Ovary (tissue), 10 donors: ENCODE measurements at regions of chr18 and their contacts with region 1.

Region 1: DNA sequence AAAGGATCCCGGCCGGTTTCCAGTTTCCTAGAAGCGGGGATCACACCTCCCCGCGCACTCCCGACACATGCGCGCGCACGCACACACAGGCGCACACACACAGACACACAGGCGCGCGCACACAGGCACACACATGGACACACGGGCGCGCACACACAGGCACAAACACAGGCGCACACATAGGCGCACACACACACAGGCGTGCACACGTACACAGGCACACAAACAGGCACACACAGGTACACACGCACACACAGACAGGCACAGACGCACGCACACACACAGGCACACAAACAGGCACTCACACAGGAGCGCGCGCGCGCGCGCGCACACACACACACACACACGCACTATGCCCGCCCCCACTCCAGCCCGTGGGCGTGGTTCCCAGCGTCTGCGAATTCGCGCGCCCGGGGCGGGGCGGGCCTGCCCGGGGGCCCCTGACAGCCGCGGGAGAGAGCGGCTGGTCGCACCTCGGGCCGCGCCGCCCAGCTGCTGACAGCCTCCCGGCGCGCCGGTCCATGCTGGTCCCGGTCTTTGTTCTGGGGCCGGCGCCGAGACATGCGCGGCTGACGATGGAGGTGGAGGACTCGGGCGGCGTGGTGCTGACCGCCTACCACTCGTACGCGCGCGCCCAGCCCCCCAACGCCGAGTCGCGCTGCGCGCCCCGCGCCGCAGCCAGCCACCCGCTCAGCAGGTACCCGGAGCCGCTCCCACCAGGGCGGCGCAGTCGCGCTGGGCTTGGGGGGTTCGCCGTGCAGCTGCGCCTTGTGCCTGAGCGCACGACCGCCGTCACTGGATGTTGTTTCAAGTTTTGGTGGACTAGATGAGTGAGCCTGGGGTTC is at the start of gene ARHGAP28:
- DNase-seq: peak; percentile 89 to 98 (median 93)
- H3K4me3 ChIP-seq: peak within 1 kb of the TSS; percentile 62
- H3K27ac ChIP-seq: peak within 1 kb of the TSS; percentile 89 to 97
- H3K4me1 ChIP-seq: peaks cover 7% of the 10 kb centered on the region
- H3K27me3 ChIP-seq: no peaks in the 10 kb centered on the region
- CTCF ChIP-seq: peak; percentile 42 to 67 (median 59)
- EP300 ChIP-seq: no peak
- POLR2A ChIP-seq: peak; percentile 52
- total RNA-seq, gene ARHGAP28: 15.7 to 28.7 (median 19.2) TPM

Region 2: DNA sequence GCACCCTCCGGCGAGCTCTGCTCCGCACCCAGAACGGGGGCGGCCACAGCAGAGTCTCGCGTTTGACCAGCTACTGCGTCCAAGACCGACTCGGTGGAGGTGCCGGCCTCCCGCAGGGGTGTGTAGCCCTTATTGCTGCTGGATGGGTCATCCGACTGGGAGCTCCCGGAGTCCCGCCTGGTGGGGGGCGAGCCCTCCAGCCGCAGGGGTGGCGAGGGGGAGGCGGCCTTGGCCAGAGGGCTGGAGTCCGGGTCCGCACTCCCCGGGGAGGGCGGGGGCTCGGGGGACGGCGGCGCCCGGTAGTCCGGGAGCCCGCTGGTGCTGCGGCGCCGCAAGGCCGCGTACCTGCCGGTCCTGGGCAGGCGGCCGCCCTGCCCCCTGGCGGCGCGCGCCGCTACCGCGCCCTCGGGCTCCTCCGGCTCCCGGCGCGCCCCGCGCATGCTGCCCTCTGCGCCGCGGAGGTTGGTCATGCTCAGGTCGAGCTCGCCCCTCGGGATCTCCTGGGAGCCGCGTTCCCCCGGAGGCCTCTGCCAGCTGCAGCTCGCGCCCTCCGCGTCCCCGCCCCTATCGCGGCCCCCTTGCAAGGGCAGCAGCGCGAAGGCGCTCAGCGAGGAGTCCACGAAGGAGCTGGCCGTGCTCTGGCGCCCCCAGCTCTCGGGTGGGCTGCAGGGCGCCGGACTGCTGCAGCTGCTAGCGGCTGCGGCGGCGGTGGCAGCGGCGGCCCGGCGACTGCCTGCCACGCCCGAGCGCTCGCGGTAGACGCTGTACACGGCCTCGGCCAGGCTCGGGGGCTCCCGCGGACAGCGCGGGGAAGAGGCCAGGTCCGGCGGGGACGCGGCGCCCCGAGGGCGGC is 838.9 kb before region 1 on chr18:
- intact Hi-C with region 1: loop called in 1 of 4 experiments (anchors 10 kb)
- DNase-seq: peak; percentile 35 to 70 (median 55)
- H3K4me3 ChIP-seq: peak overlapping the region; percentile 17
- H3K27ac ChIP-seq: no peak overlapping the region
- H3K4me1 ChIP-seq: peaks cover 2% of the 10 kb centered on the region
- H3K27me3 ChIP-seq: no peaks in the 10 kb centered on the region
- CTCF ChIP-seq: peak; percentile 10 to 61 (median 52)
- EP300 ChIP-seq: no peak
- POLR2A ChIP-seq: no peak

Region 3: DNA sequence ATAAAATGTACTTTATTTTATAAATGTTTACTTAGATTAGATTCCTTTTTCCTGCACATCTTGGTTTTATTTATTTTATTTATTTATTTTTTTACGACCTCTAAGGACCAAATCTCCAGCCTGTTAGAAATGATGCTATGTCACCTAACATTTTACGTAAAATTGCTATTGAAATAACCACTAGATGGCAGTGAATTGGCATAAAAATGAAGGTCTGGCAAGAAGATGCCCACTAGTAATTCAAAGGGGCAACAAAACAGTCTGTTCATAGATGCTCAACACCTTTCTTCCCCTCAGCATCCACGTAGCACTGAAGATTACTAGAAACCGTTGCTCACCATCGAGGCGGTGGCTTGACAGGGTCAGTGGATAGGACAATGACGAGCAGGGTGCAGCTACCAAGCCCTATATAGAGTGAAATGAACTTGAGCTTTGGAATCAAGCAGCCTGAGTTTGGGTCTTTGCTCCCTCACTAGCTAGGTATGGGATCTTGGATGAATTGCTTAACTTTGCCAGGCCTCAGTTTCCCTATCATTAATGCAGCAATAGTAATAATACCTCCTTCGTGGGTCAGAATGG is 186.1 kb before region 1 on chr18:
- intact Hi-C with region 1: loop called in 1 of 4 experiments (anchors 5 kb)
- DNase-seq: no peak
- H3K4me3 ChIP-seq: no peak overlapping the region
- H3K27ac ChIP-seq: no peak overlapping the region
- H3K4me1 ChIP-seq: peaks cover 5% of the 10 kb centered on the region
- H3K27me3 ChIP-seq: no peaks in the 10 kb centered on the region
- CTCF ChIP-seq: peak; percentile 42 to 63 (median 61)
- EP300 ChIP-seq: no peak
- POLR2A ChIP-seq: no peak

Region 4: GRCh38 chr18:6624271-6624660 is 105.2 kb before region 1 on chr18:
- intact Hi-C with region 1: loop called in 2 of 4 experiments (anchors 10 kb)
- DNase-seq: no peak
- H3K4me3 ChIP-seq: no peak overlapping the region
- H3K27ac ChIP-seq: peak overlapping the region in 1 of 2 donors; percentile 77
- H3K4me1 ChIP-seq: peaks cover 20% of the 10 kb centered on the region
- H3K27me3 ChIP-seq: no peaks in the 10 kb centered on the region
- CTCF ChIP-seq: no peak
- EP300 ChIP-seq: no peak
- POLR2A ChIP-seq: no peak

Region 5: DNA sequence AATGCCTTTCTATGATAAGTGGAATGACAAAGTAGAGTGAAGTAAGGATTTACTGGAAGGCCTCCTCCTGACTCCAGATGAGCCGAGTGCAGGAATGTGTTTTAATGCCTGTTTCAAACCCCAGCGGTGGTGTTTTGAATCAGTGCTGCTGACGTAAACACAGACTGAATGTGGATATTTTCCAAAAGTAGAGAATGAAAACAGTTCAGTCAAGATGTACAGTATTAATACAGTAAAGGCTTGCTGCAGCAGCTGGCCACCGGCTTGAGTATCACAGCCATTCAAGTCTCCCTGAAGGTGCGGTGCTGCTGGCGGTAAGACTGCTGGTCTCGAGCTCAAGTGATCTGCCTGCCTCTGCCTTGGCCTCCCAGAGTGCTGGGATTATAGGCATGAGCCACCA is 46.7 kb after region 1 on chr18:
- intact Hi-C with region 1: loop called in 1 of 4 experiments (anchors 5 kb)
- DNase-seq: peak; percentile 37 to 66 (median 55)
- H3K4me3 ChIP-seq: no peak overlapping the region
- H3K27ac ChIP-seq: peak overlapping the region in 1 of 2 donors; percentile 74
- H3K4me1 ChIP-seq: peaks cover 9% of the 10 kb centered on the region
- H3K27me3 ChIP-seq: no peaks in the 10 kb centered on the region
- CTCF ChIP-seq: peak in 1 of 3 donors; percentile 16
- EP300 ChIP-seq: no peak
- POLR2A ChIP-seq: no peak

Region 6: GRCh38 chr18:6878556-6879297 is 149.3 kb after region 1 on chr18:
- intact Hi-C with region 1: loop called in 3 of 4 experiments (anchors 5 to 10 kb)
- DNase-seq: peak in 2 of 5 donors; percentile 30 to 33
- H3K4me3 ChIP-seq: no peak overlapping the region
- H3K27ac ChIP-seq: no peak overlapping the region
- H3K4me1 ChIP-seq: peaks cover 5% of the 10 kb centered on the region
- H3K27me3 ChIP-seq: no peaks in the 10 kb centered on the region
- CTCF ChIP-seq: no peak
- EP300 ChIP-seq: no peak
- POLR2A ChIP-seq: no peak

Region 7: DNA sequence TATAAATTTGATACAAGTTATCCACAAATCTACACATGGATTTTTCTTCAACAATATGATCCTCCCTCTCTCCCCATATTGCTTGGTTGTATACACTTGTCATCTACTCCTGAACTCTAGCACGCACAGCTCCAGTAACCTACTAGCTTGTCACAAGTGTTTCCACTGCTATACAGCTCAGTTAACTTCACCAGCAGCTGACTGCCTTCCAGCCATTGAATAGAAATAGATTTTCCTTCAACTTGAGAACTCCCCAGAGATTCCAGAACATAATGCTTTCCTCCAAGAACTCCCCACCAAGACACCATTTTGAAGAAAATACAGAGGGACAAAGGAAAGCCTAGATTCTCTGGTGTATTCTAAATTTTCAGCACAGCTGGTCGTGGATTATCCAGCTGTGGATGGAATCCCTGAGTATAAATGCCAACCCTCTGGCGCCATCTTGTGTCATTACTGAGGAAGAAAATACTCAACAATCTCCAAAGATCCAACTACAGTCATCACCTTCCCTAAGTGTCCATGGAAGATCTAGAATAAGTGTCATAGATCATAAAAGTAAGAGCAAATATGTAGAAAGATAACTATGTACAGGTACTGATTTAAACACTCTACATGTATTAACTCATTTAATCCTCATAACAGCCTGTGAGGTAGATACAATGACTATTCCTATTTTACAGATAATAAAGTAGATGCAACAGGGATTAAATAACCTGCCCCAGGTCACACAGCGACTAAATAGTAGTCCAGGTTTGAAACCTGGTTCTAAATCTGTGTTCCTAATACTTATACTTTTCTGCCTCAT is 156.7 kb after region 1 on chr18:
- intact Hi-C with region 1: loop called in 2 of 4 experiments (anchors 5 to 10 kb)
- DNase-seq: peak in 4 of 5 donors; percentile 46 to 71 (median 56)
- H3K4me3 ChIP-seq: no peak overlapping the region
- H3K27ac ChIP-seq: no peak overlapping the region
- H3K4me1 ChIP-seq: peaks cover 2% of the 10 kb centered on the region
- H3K27me3 ChIP-seq: no peaks in the 10 kb centered on the region
- CTCF ChIP-seq: peak; percentile 67 to 77 (median 73)
- EP300 ChIP-seq: no peak
- POLR2A ChIP-seq: no peak